HEK293 (cell line): ENCODE measurements at regions of chr18 and their contacts with region 1.

Region 1: GRCh38 chr18:3447895-3448837 is 1.8 kb upstream of the TGIF1 start:
- H3K4me3 ChIP-seq: peak overlapping the region; percentile 56
- H3K27ac ChIP-seq: peak overlapping the region; percentile 98
- H3K4me1 ChIP-seq: peaks cover 5% of the 10 kb centered on the region
- CTCF ChIP-seq: peak; percentile 76

Region 2: GRCh38 chr18:3281456-3282400 is 166.4 kb before region 1 on chr18:
- CTCF ChIA-PET with region 1: interaction called, 43 read pairs
- POLR2A ChIA-PET with region 1: interaction called, 6 read pairs
- H3K4me3 ChIP-seq: no peak overlapping the region
- H3K27ac ChIP-seq: no peak overlapping the region
- H3K4me1 ChIP-seq: no peaks in the 10 kb centered on the region
- CTCF ChIP-seq: peak; percentile 36; the same call in 1 of the 2 replicates

Region 3: GRCh38 chr18:3383381-3383915 is 64.7 kb before region 1 on chr18:
- CTCF ChIA-PET with region 1: interaction called, 3 read pairs
- POLR2A ChIA-PET with region 1: interaction called, 10 read pairs
- H3K4me3 ChIP-seq: no peak overlapping the region
- H3K27ac ChIP-seq: peak overlapping the region; percentile 24; the same call in 1 of the 2 replicates
- H3K4me1 ChIP-seq: peaks cover 5% of the 10 kb centered on the region; the same call in 1 of the 2 replicates
- CTCF ChIP-seq: no peak

Region 4: GRCh38 chr18:3585656-3586509 is 137.7 kb after region 1 on chr18:
- CTCF ChIA-PET with region 1: interaction called, 32 read pairs
- POLR2A ChIA-PET with region 1: interaction called, 12 read pairs
- H3K4me3 ChIP-seq: no peak overlapping the region
- H3K27ac ChIP-seq: no peak overlapping the region
- H3K4me1 ChIP-seq: no peaks in the 10 kb centered on the region; the same call in 1 of the 2 replicates
- CTCF ChIP-seq: peak; percentile 63